Activated CD8-positive, alpha-beta T cell treated with anti-CD3 and anti-CD28 coated beads for 36 hours (primary cell): ENCODE measurements at regions of chr9 and their contacts with region 1.

Region 1: DNA sequence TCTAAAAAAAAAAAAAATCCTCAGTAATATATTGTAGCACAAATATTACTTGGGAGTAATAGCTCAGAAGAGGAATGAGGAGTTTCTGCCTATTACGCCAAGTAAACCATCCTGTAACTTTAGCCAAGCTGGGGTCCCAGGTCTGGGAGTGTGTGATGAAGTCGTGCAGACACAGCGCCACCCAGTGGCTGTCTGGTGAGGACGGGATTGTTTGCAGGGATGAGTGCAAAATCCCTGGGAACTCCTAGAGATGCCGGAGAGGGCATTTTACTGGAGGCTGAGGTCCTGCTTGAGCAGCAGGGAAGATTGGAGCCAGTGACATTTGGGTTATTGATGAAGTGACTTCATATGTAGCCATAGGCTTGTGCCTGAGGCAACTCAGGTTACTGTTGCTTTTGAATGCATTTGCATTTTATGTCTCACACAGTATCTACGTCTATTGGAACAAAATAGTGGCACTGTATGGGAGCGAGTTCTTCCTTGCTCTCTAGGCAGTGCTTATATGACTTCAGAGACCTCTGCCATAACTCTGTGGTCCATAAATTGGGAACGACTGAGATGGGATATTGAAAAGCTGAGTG is 72.8 kb downstream of the PSAT1 start:
- DNase-seq: peak; percentile 77
- ATAC-seq: peak; percentile 60
- H3K4me3 Mint-ChIP-seq: no peak overlapping the region
- H3K27ac Mint-ChIP-seq: no peak overlapping the region
- H3K4me1 Mint-ChIP-seq: no peaks in the 10 kb centered on the region
- H3K27me3 Mint-ChIP-seq: no peaks in the 10 kb centered on the region
- CTCF ChIP-seq: peak; percentile 91

Region 2: GRCh38 chr9:78261403-78262001 is 108.2 kb before region 1 on chr9:
- CTCF ChIA-PET with region 1: interaction called, 16 read pairs
- POLR2A ChIA-PET with region 1: no interaction called
- intact Hi-C with region 1: loop called (anchors 5 kb)
- DNase-seq: no peak
- ATAC-seq: no peak
- H3K4me3 Mint-ChIP-seq: no peak overlapping the region
- H3K27ac Mint-ChIP-seq: no peak overlapping the region
- H3K4me1 Mint-ChIP-seq: no peaks in the 10 kb centered on the region
- H3K27me3 Mint-ChIP-seq: no peaks in the 10 kb centered on the region
- CTCF ChIP-seq: peak; percentile 73

Region 3: GRCh38 chr9:78357165-78357873 is 12.4 kb before region 1 on chr9:
- CTCF ChIA-PET with region 1: interaction called, 16 read pairs
- POLR2A ChIA-PET with region 1: interaction called, 3 read pairs
- intact Hi-C with region 1: no loop called
- DNase-seq: no peak
- ATAC-seq: no peak
- H3K4me3 Mint-ChIP-seq: no peak overlapping the region
- H3K27ac Mint-ChIP-seq: no peak overlapping the region
- H3K4me1 Mint-ChIP-seq: no peaks in the 10 kb centered on the region
- H3K27me3 Mint-ChIP-seq: no peaks in the 10 kb centered on the region
- CTCF ChIP-seq: no peak

Region 4: DNA sequence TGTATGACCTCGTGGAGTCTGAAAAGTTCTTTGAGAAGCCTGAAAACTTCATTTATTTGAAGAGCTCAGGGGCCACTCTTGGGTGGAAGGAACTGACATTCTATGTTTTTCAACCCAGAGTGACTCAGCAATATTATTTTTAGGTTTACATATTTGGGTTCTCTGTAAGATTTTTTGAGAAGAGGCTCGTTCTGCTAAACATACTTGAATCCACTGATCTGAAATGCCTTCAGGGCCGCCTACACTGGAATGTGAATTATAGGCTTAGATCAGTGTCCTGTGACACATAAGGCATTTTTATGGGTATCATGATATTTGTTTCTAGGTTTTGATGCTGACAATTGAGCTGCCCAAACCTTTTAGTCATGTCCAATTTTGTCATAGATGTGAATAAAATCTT is 13.4 kb after region 1 on chr9:
- CTCF ChIA-PET with region 1: interaction called, 10 read pairs
- POLR2A ChIA-PET with region 1: no interaction called
- intact Hi-C with region 1: no loop called
- DNase-seq: no peak
- ATAC-seq: no peak
- H3K4me3 Mint-ChIP-seq: no peak overlapping the region
- H3K27ac Mint-ChIP-seq: no peak overlapping the region
- H3K4me1 Mint-ChIP-seq: no peaks in the 10 kb centered on the region
- H3K27me3 Mint-ChIP-seq: peaks cover 3% of the 10 kb centered on the region
- CTCF ChIP-seq: no peak